BJ (cell line): ENCODE measurements at regions of chr10 and their contacts with region 1.

Region 1: GRCh38 chr10:103427866-103428265 is 24.3 kb downstream of the CALHM2 start:
- DNase-seq: no peak
- H3K4me3 ChIP-seq: no peak overlapping the region
- H3K27me3 ChIP-seq: no peaks in the 10 kb centered on the region
- CTCF ChIP-seq: no peak

Region 2: GRCh38 chr10:102729029-102730026 is 698.5 kb before region 1 on chr10:
- CTCF ChIA-PET with region 1: no interaction called
- POLR2A ChIA-PET with region 1: no interaction called
- DNase-seq: no peak
- H3K4me3 ChIP-seq: no peak overlapping the region
- H3K27me3 ChIP-seq: no peaks in the 10 kb centered on the region
- CTCF ChIP-seq: peak; percentile 91

Region 3: DNA sequence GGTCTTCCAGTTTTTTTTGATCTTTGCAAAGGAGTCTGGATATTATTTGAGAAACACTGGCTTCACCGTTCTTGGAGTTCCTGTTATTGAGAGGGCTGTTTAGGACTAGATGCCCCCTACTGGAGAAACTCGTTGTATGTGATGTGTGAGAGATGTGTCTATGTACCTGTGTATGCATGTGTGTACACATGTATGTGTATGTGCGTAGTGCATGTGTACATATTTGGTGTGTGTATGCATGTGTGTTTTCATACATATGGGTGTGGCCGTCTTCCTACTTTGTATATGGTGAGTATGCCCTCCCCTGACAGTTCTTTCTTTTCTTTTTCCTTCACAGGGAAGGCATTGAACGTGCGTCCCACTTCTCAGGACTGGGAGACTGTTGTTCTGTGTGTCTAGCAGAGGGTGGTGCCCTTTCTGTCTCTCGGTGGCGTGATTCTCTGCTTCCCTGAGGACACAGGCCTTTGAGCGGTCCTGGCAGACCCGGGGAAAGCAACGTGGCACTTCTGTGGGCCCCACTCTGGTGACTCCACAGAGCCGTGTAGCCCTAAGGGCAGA is 54.2 kb after region 1 on chr10:
- CTCF ChIA-PET with region 1: interaction called, 40 read pairs
- POLR2A ChIA-PET with region 1: no interaction called
- DNase-seq: no peak
- H3K4me3 ChIP-seq: no peak overlapping the region
- H3K27me3 ChIP-seq: no peaks in the 10 kb centered on the region
- CTCF ChIP-seq: peak; percentile 72